Ovary (tissue), 10 donors: ENCODE measurements at regions of chr12 and their contacts with region 1.

Region 1: DNA sequence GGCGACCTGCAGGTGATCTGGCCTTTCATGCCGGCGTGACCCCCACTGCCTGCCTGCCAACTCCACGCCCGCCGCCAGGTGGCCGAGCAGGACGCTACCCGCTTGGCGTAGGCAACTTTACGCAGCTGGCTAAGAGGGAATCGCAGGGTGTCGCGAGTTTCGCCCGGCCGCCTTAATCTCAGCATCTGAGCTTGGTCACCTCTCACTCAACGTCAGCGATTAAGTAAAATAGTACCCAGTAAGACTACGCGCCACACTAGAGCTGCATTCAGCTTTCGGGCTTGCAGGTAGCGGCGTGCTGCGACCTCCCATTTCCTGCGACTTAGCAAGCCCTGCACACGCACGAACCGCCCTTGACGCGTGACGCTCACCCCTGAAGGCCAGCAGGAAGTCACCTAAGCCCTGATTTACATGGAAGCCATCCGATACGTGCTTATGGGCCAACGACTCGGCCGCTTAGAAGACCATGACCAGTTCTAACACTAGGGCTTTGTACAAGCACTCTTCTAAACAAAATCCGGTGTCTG is 33.2 kb downstream of the WBP11 start:
- DNase-seq: peak; percentile 75 to 86 (median 82)
- H3K4me3 ChIP-seq: peak overlapping the region; percentile 81
- H3K27ac ChIP-seq: peak overlapping the region; percentile 74 to 91
- H3K4me1 ChIP-seq: no peaks in the 10 kb centered on the region
- H3K27me3 ChIP-seq: no peaks in the 10 kb centered on the region
- CTCF ChIP-seq: peak; percentile 78 to 84 (median 84)
- EP300 ChIP-seq: no peak
- POLR2A ChIP-seq: peak; percentile 20

Region 2: DNA sequence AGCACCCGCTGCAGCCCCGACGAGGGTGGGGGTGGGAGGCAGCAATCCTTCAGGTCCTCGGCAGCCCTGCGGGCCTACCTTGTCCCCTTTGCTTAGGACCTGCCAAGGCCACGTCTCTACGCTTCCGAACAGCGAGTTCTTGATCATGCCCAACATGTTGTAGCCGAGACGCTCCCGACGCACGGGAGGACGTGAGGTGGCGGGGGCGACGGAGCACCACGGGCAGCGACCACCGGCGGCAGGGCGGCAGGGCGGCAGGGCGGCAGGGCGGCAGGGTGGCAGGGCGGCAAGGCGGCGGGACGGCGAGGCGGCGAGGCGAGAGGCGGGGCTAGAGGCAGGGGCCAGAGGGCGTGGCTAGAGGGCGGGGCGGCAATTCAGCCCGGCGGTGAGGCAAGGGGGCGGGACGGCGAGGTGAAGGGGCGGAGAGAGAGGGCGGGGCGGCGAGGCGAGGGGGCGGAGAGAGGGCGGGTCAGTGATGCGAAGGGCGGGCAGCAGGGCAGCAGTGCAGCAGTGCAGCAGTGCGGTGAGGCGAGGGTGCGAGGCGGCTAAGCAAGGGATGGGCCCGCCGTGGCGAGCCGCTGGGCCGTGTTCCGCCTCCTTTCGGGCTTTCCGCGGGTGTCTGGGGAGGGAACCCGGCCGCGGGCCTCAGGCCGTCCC is 1769.9 kb before region 1 on chr12 and contains the start of gene HEBP1:
- intact Hi-C with region 1: loop called in 1 of 4 experiments (anchors 10 kb)
- DNase-seq: peak; percentile 96 to 99 (median 98)
- H3K4me3 ChIP-seq: peak within 1 kb of the TSS; percentile 62
- H3K27ac ChIP-seq: peak within 1 kb of the TSS; percentile 89 to 95
- H3K4me1 ChIP-seq: peaks cover 9% of the 10 kb centered on the region
- H3K27me3 ChIP-seq: no peaks in the 10 kb centered on the region
- CTCF ChIP-seq: peak in 1 of 3 donors; percentile 13
- EP300 ChIP-seq: no peak
- POLR2A ChIP-seq: peak; percentile 92
- total RNA-seq, gene HEBP1: 31.6 to 102 (median 83.7) TPM

Region 3: GRCh38 chr12:14394317-14395073 is 375.5 kb before region 1 on chr12:
- intact Hi-C with region 1: loop called in 1 of 4 experiments (anchors 10 kb)
- DNase-seq: no peak
- H3K4me3 ChIP-seq: no peak overlapping the region
- H3K27ac ChIP-seq: peak overlapping the region in 1 of 2 donors; percentile 37
- H3K4me1 ChIP-seq: peaks cover 6% of the 10 kb centered on the region
- H3K27me3 ChIP-seq: no peaks in the 10 kb centered on the region
- CTCF ChIP-seq: peak in 1 of 3 donors; percentile 24
- EP300 ChIP-seq: no peak
- POLR2A ChIP-seq: no peak

Region 4: DNA sequence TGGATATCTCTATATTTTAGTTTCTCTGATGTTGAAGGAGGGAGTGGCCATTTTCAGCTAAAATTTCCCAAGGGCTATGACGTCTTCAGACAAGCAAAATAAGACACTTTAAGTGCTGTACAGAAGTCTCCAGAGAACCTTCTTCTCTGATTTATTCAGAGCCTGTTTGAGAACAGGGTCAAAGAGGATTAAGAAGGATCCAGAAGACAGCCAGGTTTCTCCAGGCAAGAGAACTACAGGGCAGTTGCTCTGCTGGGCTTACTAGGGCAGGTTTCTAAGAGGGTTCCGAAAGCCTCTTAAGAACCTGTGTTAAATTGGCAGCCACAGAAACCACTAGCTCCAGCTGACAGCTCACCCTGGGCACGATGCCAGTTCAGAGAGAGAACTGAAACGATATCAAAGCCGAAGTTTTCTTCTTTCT is 114.4 kb after region 1 on chr12:
- intact Hi-C with region 1: loop called in 1 of 4 experiments (anchors 10 kb)
- DNase-seq: peak; percentile 81 to 93 (median 88)
- H3K4me3 ChIP-seq: peak overlapping the region; percentile 37
- H3K27ac ChIP-seq: peak overlapping the region; percentile 26 to 74
- H3K4me1 ChIP-seq: peaks cover 10% of the 10 kb centered on the region
- H3K27me3 ChIP-seq: no peaks in the 10 kb centered on the region
- CTCF ChIP-seq: no peak
- EP300 ChIP-seq: no peak
- POLR2A ChIP-seq: no peak

Region 5: GRCh38 chr12:14901228-14901562 is 131.2 kb after region 1 on chr12:
- intact Hi-C with region 1: loop called in 1 of 4 experiments (anchors 10 kb)
- DNase-seq: no peak
- H3K4me3 ChIP-seq: no peak overlapping the region
- H3K27ac ChIP-seq: peak overlapping the region; percentile 1 to 24
- H3K4me1 ChIP-seq: peaks cover 4% of the 10 kb centered on the region
- H3K27me3 ChIP-seq: no peaks in the 10 kb centered on the region
- CTCF ChIP-seq: no peak
- EP300 ChIP-seq: no peak
- POLR2A ChIP-seq: no peak